ENCODE measurements at regions of chr6 and their contacts with region 1.

Region 1: DNA sequence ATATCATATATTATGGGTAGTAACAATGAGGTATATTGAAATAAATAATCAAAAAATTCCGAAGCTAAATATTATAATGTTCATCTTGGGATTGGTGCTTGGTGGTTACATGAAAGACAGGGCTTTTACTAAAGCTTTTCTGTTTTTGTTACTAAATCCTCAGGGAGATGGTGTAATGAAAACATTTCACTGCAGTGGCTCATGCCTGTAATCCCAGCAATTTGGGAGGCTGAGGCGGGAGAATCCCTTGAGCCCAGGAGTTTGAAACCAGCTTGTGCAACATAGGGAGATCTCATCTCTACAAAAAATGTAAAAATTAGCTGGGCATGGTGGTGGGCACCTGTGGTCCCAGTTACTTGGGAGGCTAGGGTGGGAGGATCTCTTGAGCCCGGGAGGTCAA is 42.9 kb downstream of the AFG1L start:
- DNase-seq: no peak
- ATAC-seq: no peak
- H3K4me3 ChIP-seq: no peak overlapping the region
- H3K4me3 Mint-ChIP-seq: no peak overlapping the region
- H3K27ac ChIP-seq: no peak overlapping the region
- H3K27ac Mint-ChIP-seq: no peak overlapping the region
- H3K4me1 ChIP-seq: no peaks in the 10 kb centered on the region
- H3K4me1 Mint-ChIP-seq: no peaks in the 10 kb centered on the region
- H3K27me3 ChIP-seq: no peaks in the 10 kb centered on the region
- H3K27me3 Mint-ChIP-seq: no peaks in the 10 kb centered on the region
- CTCF ChIP-seq: no peak

Region 2: DNA sequence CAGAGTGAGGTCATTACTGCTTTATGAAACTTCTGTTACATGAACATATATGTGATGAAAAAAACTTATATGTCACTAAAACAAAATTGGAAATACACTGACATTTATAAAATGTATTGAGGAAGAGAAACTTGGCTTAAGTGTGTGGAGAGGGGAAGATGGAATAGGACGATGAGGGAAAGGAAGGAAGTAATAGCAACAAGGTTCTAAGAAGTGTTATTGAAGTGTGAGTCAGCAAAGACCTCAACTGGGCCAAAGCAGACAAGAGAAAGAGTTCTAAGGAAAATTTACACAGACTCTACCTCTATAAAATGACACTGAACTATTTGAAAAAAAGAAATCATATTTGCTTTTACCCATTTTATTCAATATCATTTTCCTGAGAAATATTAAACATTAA is 115.2 kb before region 1 on chr6:
- CTCF ChIA-PET with region 1: no interaction called
- POLR2A ChIA-PET with region 1: no interaction called
- intact Hi-C with region 1: no loop called
- DNase-seq: no peak
- ATAC-seq: no peak
- H3K4me3 ChIP-seq: no peak overlapping the region
- H3K4me3 Mint-ChIP-seq: no peak overlapping the region
- H3K27ac ChIP-seq: no peak overlapping the region
- H3K27ac Mint-ChIP-seq: peak overlapping the region; percentile 11
- H3K4me1 ChIP-seq: no peaks in the 10 kb centered on the region
- H3K4me1 Mint-ChIP-seq: peaks cover 19% of the 10 kb centered on the region
- H3K27me3 ChIP-seq: no peaks in the 10 kb centered on the region
- H3K27me3 Mint-ChIP-seq: no peaks in the 10 kb centered on the region
- CTCF ChIP-seq: no peak

Region 3: DNA sequence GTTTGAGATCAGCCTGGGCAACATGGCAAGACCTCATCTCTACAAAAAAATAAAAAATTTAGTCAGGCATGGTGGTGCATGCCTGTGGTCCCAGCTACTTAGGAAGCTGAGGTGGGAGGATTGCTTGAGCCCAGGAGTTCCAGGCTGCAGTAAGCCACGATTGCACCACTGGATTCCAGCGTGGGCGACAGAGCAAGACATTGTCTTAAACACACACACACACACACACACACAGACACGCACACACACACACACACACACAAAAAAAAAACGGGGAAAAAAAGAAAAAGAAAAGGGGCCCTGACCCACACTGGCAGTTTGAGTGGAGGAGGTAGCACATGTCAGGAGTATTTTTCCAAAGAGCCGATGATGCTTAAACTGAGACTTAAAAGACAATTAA is 79.3 kb after region 1 on chr6:
- CTCF ChIA-PET with region 1: no interaction called
- POLR2A ChIA-PET with region 1: no interaction called
- intact Hi-C with region 1: loop called in 1 of 2 experiments (anchors 5 kb)
- DNase-seq: no peak
- ATAC-seq: no peak
- H3K4me3 ChIP-seq: no peak overlapping the region
- H3K4me3 Mint-ChIP-seq: no peak overlapping the region
- H3K27ac ChIP-seq: no peak overlapping the region
- H3K27ac Mint-ChIP-seq: no peak overlapping the region
- H3K4me1 ChIP-seq: no peaks in the 10 kb centered on the region
- H3K4me1 Mint-ChIP-seq: no peaks in the 10 kb centered on the region
- H3K27me3 ChIP-seq: no peaks in the 10 kb centered on the region
- H3K27me3 Mint-ChIP-seq: no peaks in the 10 kb centered on the region
- CTCF ChIP-seq: no peak

Measured in CD8-positive, alpha-beta T cell (primary cell).